Posterior cingulate gyrus (tissue), 11 donors: ENCODE measurements at regions of chr2 and their contacts with region 1.

Region 1: DNA sequence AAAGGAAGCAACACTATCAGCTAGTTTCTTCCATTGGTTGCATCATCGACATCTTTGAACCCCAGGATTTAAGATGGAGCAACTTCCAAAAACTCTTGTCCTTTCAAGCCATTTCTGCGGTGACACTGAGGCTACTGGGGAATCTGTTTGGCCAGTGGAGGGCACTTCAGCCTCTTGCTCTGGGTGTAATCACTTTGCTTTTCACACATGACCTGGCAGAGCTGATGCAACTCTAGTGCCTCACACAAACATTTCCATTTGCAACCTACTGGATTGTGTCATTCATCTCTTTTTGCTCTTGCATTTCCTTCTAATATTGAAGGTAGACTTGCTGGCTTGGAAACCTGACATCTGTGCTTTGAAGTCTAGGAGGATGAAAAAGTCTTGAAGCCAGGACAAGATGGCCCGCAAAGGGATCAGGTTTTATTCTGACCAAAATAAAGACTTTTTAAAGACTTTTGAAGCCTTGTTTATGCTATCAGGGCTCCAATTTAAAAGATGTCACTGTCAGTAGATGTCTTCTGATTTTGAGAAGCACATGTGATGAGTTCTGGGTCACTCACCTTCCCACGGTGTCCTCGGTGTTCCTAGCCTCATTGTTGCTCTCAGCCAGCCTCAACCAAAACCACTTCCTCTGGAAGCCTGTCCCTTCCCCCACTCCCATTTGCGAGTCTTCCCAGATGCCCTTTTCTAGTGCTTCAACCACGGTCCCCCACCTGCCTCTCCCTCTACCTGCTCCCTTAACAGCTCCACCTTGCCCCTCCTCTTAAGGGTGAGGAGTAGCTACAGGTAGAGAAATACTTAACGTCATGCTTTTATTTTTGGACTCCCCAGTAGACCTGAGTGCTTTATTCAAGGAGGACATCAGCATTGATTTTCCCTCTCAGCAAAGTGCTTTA is 69.7 kb upstream of the KCNE4 start:
- DNase-seq: peak in 6 of 10 donors; percentile 32 to 90 (median 54)

Region 2: DNA sequence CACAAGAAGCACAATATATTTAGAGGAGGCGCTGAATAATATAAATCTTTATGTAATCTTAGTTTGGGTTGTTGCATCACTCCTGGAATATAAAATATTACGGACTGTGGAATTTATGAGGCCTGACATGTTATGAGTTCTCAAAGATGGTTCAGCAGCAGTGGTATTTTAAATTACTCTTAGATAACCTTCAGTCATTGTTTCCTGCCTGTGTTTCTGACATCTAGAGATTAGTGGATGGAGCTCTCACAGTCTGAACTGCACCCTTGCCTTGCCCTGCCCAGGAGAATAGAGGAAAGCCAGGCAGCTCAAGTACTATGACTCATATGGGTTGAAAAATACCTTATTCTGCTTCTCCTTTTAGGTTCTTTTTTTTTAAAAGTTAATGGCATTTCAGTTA is 51.4 kb before region 1 on chr2:
- intact Hi-C with region 1: no loop called
- DNase-seq: no peak

Region 3: GRCh38 chr2:223101340-223102039 is 119.2 kb after region 1 on chr2:
- intact Hi-C with region 1: loop called (anchors 5 kb)
- DNase-seq: no peak